HEK293 (cell line): ENCODE measurements at regions of chr5 and their contacts with region 1.

Region 1: GRCh38 chr5:17189381-17190036 is 27.9 kb upstream of the BASP1 start:
- H3K4me3 ChIP-seq: no peak overlapping the region
- H3K27ac ChIP-seq: no peak overlapping the region
- H3K4me1 ChIP-seq: 0 out of 2 replicates have a peak, but pooled peaks cover 5% of the 10 kb centered on the region
- CTCF ChIP-seq: peak; percentile 76

Region 2: DNA sequence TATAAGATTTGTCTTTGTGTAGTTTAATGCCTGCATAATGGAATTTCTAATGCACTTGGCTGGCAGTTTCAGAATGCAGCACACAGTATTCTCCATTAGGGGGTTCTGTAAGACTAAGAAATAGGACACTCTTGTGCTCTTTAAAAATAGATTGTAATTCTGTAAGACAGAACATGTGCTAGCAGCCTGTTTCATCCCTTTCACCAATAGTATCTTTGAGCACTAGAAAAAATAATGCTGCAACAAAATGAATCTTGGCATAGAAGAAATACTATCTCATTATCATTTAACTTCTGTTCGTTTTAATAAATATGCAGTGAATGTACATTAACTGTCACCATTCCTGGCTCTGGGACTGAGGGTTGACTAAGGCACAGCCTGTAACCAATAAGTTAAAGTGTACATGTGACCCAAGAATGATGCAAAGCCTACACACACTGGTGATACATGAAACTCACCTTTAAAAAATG is 700.2 kb before region 1 on chr5:
- CTCF ChIA-PET with region 1: interaction called, 10 read pairs
- POLR2A ChIA-PET with region 1: no interaction called
- H3K4me3 ChIP-seq: no peak overlapping the region
- H3K27ac ChIP-seq: no peak overlapping the region
- H3K4me1 ChIP-seq: no peaks in the 10 kb centered on the region
- CTCF ChIP-seq: peak; percentile 48; the same call in 1 of the 2 replicates

Region 3: GRCh38 chr5:16759147-16759773 is 430.2 kb before region 1 on chr5:
- CTCF ChIA-PET with region 1: interaction called, 20 read pairs
- POLR2A ChIA-PET with region 1: no interaction called
- H3K4me3 ChIP-seq: no peak overlapping the region
- H3K27ac ChIP-seq: no peak overlapping the region
- H3K4me1 ChIP-seq: peaks cover 5% of the 10 kb centered on the region; the same call in 1 of the 2 replicates
- CTCF ChIP-seq: no peak

Region 4: DNA sequence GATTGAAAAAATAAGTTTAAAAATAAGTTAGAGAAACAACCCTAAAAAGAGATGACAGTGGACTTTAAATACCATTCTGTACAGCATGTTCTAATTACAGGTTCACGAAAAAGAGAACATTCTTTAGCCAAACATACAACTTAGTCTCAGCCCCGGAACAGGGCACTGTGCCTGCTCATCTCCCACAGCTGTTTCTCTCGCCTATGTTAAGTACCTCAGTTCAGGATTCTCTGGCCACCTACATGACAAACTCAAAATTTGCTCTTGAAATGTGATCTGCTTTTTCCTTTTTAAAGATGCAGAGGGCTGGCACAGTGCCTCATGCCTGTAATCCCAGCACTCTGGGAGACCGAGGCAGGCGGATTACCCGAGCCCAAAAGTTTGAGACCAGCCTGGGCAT is 305.7 kb before region 1 on chr5:
- CTCF ChIA-PET with region 1: interaction called, 11 read pairs
- POLR2A ChIA-PET with region 1: no interaction called
- H3K4me3 ChIP-seq: no peak overlapping the region
- H3K27ac ChIP-seq: no peak overlapping the region
- H3K4me1 ChIP-seq: peaks cover 53% of the 10 kb centered on the region
- CTCF ChIP-seq: no peak

Region 5: DNA sequence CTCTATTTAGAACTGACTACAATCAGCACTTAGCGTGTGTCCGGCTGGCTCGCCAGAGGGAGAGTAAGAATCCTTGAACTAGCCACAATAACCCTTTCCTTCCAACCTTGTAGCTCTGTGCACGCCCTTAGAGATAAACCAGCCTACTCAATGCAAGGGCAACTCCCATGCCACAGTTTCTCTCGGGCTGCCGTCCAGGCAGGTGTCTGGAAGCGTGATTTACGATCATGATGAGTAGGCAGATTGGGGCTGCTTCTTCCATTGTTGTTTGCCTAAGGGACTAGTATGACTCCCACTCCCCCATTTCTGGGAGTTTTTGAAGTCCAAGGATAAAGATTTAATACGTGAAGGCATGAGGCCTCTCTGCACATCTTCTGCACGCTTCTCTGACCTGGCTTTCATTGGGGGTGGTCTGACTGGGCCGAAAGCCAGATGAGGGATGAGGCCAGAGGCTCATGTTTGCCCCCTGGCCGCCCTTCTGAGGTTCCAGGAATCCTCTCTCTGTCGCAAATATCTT is 119.5 kb before region 1 on chr5:
- CTCF ChIA-PET with region 1: interaction called, 17 read pairs
- POLR2A ChIA-PET with region 1: interaction called, 3 read pairs
- H3K4me3 ChIP-seq: no peak overlapping the region
- H3K27ac ChIP-seq: peak overlapping the region; percentile 51; the same call in 1 of the 2 replicates
- H3K4me1 ChIP-seq: peaks cover 15% of the 10 kb centered on the region
- CTCF ChIP-seq: no peak

Region 6: GRCh38 chr5:17151686-17152085 is 37.8 kb before region 1 on chr5:
- CTCF ChIA-PET with region 1: interaction called, 51 read pairs
- POLR2A ChIA-PET with region 1: no interaction called
- H3K4me3 ChIP-seq: no peak overlapping the region
- H3K27ac ChIP-seq: no peak overlapping the region
- H3K4me1 ChIP-seq: no peaks in the 10 kb centered on the region
- CTCF ChIP-seq: no peak

Region 7: GRCh38 chr5:17426104-17426749 is 236.7 kb after region 1 on chr5:
- CTCF ChIA-PET with region 1: no interaction called
- POLR2A ChIA-PET with region 1: no interaction called
- H3K4me3 ChIP-seq: no peak overlapping the region
- H3K27ac ChIP-seq: no peak overlapping the region
- H3K4me1 ChIP-seq: peaks cover 15% of the 10 kb centered on the region
- CTCF ChIP-seq: no peak